Activated naive CD4-positive, alpha-beta T cell treated with anti-CD3 and anti-CD28 coated beads for 36 hours (primary cell): ENCODE measurements at regions of chr12 and their contacts with region 1.

Region 1: GRCh38 chr12:122974274-122974891 is 661 bp upstream of the OGFOD2 start:
- DNase-seq: peak; percentile 100
- H3K4me3 Mint-ChIP-seq: peak overlapping the region; percentile 90
- H3K27ac Mint-ChIP-seq: peak overlapping the region; percentile 100
- H3K4me1 Mint-ChIP-seq: peaks cover 33% of the 10 kb centered on the region
- H3K27me3 Mint-ChIP-seq: no peaks in the 10 kb centered on the region

Region 2: DNA sequence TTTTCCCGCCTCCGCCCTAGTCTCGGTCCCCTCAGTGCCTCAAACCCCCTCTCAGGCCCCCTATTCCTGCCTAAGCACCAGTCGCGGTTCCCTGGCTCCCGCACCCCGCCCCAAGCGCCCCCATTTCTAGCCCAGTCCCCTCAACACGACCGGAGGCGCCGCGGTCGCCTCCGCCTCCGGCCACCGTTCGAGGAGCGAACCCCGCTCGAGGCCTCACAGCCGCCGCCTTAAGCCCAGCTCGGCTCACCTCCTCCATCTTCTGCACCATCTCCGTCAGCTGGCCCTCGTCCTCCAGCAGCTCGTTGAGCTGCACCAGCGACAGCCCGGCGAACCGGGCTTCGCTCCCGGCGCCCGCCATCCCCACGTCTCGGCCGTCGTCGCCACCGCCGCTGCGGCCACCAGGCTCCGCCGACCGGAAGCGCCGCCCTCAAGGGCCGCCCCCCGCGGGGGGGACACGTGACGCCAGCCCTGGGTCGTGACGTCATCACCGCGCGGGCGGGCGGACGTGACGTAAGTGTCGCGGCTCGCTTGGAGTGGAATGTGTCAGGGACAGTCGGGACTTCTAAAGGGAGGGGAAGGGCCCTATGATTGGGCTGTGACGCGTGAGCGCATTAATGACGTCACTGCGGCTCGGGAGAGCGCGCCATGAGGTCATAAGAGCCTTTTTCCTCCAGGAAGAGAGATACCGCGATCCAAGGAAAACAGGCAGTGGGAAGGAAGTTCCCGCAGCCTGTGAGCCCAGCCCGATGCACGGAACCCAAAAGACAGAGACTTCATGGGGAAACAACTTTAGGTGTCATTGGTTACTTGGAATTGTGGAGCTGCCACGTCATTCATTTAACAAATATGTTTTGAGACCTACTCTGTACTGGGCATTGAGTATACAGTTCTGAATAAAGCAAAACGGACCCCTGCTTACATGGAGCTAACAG is 78.4 kb before region 1 on chr12 and contains the start of gene VPS37B:
- CTCF ChIA-PET with region 1: no interaction called
- intact Hi-C with region 1: loop called (anchors 1 kb)
- DNase-seq: peak; percentile 92
- H3K4me3 Mint-ChIP-seq: peak within 1 kb of the TSS; percentile 83
- H3K27ac Mint-ChIP-seq: peak within 1 kb of the TSS; percentile 83
- H3K4me1 Mint-ChIP-seq: peaks cover 86% of the 10 kb centered on the region
- H3K27me3 Mint-ChIP-seq: peaks cover 7% of the 10 kb centered on the region
- total RNA-seq, gene VPS37B: 15.6 TPM

Region 3: DNA sequence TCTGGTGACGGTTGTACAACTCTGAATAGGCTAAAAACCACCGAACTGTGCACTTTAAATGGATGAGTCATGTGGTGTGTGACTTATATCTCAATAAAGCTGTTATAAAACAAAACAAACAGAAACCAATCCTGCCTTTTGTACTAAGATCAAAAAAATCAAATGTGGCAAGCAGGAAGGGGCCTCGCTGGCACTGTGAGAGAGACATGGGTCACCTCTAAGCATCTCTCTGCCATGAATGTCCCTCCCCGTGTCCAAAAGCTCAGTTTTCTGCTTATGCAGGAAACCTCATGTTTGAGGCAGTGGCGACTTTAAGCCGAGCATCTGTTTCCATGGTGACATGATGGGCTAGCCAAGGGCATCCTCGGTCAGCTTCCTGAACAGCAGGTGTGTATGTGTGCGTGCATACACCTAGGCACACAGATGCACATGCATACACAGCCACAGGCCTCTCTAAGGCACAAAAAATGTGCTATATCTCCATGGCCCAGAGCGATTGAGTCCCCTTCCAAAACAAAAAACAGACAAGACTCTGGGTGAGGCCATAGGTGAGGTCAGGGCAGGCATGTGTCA is 50.5 kb after region 1 on chr12:
- CTCF ChIA-PET with region 1: no interaction called
- intact Hi-C with region 1: loop called (anchors 2 kb)
- DNase-seq: peak; percentile 67
- H3K4me3 Mint-ChIP-seq: no peak overlapping the region
- H3K27ac Mint-ChIP-seq: peak overlapping the region; percentile 47
- H3K4me1 Mint-ChIP-seq: peaks cover 46% of the 10 kb centered on the region
- H3K27me3 Mint-ChIP-seq: no peaks in the 10 kb centered on the region

Region 4: DNA sequence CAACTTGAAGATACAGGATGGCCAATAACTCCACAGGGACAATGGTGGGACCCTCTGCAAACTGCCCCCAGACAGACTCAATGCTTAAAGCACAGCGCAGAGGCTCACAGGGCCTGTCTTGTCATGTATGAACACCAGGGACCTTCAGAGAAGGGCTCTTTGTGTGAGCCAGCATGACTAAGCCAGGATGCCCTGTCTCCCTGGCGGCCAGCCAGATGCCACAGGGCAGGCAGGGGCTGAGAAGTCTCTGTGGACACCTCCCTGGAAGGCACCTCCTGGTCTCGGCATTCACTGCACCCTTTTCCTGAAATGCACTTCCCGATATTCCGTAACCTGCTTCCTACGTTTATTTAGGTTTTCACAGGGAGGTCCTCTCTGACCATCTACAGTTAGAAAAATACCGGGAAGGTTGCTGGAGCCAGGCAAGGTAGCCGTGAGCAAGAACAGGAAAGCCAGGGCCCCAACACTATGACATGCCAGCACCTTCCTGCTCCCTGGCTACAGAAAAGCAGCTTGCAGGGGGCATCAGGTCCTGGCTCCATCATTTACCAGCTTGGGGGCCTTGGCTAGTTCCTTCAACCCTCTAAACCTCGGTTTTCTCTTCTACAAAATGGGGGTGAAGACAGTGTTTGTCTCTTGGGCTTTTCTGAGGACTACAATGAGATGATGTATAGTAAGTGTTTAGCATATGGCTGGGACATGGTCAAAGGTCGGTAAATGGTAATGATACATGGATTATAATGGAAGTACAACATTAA is 111.5 kb after region 1 on chr12:
- CTCF ChIA-PET with region 1: no interaction called
- intact Hi-C with region 1: no loop called
- DNase-seq: peak; percentile 38
- H3K4me3 Mint-ChIP-seq: no peak overlapping the region
- H3K27ac Mint-ChIP-seq: no peak overlapping the region
- H3K4me1 Mint-ChIP-seq: peaks cover 14% of the 10 kb centered on the region
- H3K27me3 Mint-ChIP-seq: no peaks in the 10 kb centered on the region

Region 5: GRCh38 chr12:123200414-123200813 is 226.0 kb after region 1 on chr12:
- CTCF ChIA-PET with region 1: no interaction called
- intact Hi-C with region 1: no loop called
- DNase-seq: peak; percentile 48
- H3K4me3 Mint-ChIP-seq: no peak overlapping the region
- H3K27ac Mint-ChIP-seq: peak overlapping the region; percentile 79
- H3K4me1 Mint-ChIP-seq: peaks cover 19% of the 10 kb centered on the region
- H3K27me3 Mint-ChIP-seq: no peaks in the 10 kb centered on the region

Region 6: DNA sequence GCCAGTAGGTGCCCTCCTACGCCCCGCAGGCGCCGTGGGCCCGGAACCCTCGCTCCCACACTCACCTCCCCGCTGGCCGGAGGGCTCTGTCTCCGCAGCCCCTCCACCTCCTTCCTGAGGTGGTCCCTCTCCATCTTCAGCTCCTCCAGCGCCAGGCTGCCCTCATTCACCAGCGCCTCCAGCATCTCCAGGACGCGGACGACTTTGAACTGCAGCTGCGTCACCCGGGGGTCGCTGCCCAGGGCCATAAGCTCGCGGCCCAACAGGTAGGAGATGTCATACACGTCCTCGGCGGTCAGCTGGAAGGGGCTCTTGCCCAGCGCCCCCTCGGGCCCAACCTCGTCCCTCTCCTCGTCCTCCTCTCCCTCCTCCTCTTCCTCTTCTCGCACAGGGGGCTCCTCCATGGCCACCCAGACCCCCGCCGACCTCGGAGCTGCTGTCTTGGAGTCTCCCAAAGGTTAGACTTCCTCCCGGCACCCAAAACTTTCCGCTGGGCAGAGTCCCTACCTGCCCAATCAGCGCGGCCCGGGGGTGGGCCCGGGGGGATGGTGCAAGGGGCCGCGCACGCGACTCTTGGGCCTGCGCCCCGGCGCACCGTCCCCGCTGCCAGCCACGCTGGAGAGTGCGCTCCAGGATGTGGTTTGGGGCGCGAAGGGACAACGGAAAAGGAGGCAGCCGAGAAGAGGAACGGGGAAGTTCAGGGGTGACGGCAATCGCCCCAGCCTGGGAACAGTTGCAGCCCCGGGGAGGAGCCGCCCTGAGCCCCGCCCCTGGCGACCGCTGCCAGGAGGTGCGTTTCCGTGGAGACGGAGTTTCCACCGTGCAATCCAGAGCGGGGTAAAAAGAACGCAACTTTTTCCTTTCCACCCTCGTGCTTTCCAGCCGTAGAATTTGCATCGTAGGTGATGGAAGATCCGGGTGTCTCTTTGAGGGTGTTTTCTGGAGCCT is 461.9 kb after region 1 on chr12 and contains the start of gene RILPL2:
- CTCF ChIA-PET with region 1: no interaction called
- intact Hi-C with region 1: loop called (anchors 10 kb)
- DNase-seq: peak; percentile 97
- H3K4me3 Mint-ChIP-seq: peak within 1 kb of the TSS; percentile 92
- H3K27ac Mint-ChIP-seq: peak within 1 kb of the TSS; percentile 93
- H3K4me1 Mint-ChIP-seq: peaks cover 43% of the 10 kb centered on the region
- H3K27me3 Mint-ChIP-seq: no peaks in the 10 kb centered on the region
- total RNA-seq, gene RILPL2: 8.1 to 9.1 TPM

Region 7: DNA sequence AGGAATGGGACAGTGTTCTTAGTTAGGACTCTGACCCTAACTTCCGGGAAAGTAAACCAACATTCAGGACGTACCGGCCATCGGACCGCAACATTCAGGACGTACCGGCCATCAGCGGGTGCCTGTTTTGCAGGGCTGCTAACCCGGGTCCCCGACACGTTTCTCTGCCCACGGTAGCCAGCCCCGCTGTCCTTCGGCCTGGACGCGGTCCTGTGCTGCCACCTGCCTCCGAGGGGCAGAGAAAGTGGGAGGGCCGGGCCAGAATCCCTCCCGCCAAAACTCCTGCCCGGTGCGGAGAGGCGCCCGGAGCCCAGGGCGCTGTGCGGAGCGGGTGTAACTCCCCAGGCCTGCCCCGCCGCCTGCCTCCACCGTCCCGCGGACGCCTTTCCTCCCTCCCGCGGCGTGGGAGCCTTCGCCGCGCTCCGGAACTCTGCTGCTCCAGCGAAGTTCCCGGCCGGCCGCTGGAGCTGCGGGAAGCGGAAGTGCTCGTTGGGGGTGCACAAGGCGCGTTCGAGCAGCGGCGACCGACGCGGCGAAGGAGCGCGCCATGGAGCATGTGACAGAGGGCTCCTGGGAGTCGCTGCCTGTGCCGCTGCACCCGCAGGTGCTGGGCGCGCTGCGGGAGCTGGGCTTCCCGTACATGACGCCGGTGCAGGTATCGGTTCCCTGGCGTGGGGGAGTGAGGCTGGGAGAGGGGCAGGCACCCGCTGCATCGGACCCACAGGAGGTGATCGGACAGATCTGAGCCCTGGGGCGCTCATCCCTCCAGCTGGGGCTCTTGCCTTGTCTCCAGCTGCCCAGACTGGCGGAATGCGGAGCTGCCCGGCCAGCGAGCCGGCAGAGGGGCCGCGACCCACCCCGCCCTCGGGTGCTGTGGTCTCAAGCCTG is 627.5 kb after region 1 on chr12 and contains the start of gene DDX55:
- CTCF ChIA-PET with region 1: interaction called, 3 read pairs
- intact Hi-C with region 1: loop called (anchors 2 kb)
- DNase-seq: peak; percentile 87
- H3K4me3 Mint-ChIP-seq: peak within 1 kb of the TSS; percentile 89
- H3K27ac Mint-ChIP-seq: peak within 1 kb of the TSS; percentile 94
- H3K4me1 Mint-ChIP-seq: peaks cover 45% of the 10 kb centered on the region
- H3K27me3 Mint-ChIP-seq: no peaks in the 10 kb centered on the region
- total RNA-seq, gene DDX55: 44.8 to 48.7 TPM